ENCODE measurements at regions of chr7 and their contacts with region 1.

Region 1: GRCh38 chr7:32479574-32480200 is 10.5 kb downstream of the LSM5 start:
- DNase-seq: peak in 2 of 9 experiments; percentile 16 to 42
- ATAC-seq: no peak
- H3K4me3 ChIP-seq: no peak overlapping the region
- H3K4me3 Mint-ChIP-seq: no peak overlapping the region
- H3K27ac ChIP-seq: no peak overlapping the region
- H3K27ac Mint-ChIP-seq: no peak overlapping the region
- H3K4me1 ChIP-seq: peaks cover 4% of the 10 kb centered on the region
- H3K4me1 Mint-ChIP-seq: peaks cover 11% of the 10 kb centered on the region
- H3K27me3 ChIP-seq: no peaks in the 10 kb centered on the region
- H3K27me3 Mint-ChIP-seq: no peaks in the 10 kb centered on the region
- CTCF ChIP-seq: peak; percentile 31

Region 2: GRCh38 chr7:32204361-32205018 is 275.2 kb before region 1 on chr7:
- CTCF ChIA-PET with region 1: interaction called, 9 read pairs
- POLR2A ChIA-PET with region 1: no interaction called
- intact Hi-C with region 1: loop called in 1 of 2 experiments (anchors 2 kb)
- DNase-seq: no peak
- ATAC-seq: no peak
- H3K4me3 ChIP-seq: no peak overlapping the region
- H3K4me3 Mint-ChIP-seq: no peak overlapping the region
- H3K27ac ChIP-seq: no peak overlapping the region
- H3K27ac Mint-ChIP-seq: no peak overlapping the region
- H3K4me1 ChIP-seq: no peaks in the 10 kb centered on the region
- H3K4me1 Mint-ChIP-seq: no peaks in the 10 kb centered on the region
- H3K27me3 ChIP-seq: no peaks in the 10 kb centered on the region
- H3K27me3 Mint-ChIP-seq: peaks cover 4% of the 10 kb centered on the region
- CTCF ChIP-seq: no peak

Region 3: DNA sequence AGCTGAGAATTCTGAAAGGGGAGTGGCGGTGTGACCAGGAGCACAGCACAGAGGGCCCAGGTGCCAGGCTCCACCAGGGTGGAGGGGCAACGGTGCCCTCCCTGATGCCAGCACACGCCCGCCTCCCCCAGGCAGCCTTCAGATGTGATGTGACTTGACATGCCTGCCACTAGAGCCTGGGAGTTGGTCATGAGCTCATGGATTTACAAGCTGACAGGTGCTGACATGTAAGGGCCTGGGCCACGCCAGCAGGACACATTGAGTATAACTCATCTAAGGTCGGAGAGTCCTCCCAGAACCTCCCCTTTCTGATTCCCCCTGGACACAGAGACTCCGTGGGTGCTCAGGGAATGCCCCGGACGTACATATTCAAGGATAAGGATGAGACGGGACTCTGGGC is 63.8 kb before region 1 on chr7:
- CTCF ChIA-PET with region 1: no interaction called
- POLR2A ChIA-PET with region 1: no interaction called
- intact Hi-C with region 1: loop called in 1 of 2 experiments (anchors 10 kb)
- DNase-seq: no peak
- ATAC-seq: no peak
- H3K4me3 ChIP-seq: no peak overlapping the region
- H3K4me3 Mint-ChIP-seq: no peak overlapping the region
- H3K27ac ChIP-seq: no peak overlapping the region
- H3K27ac Mint-ChIP-seq: no peak overlapping the region
- H3K4me1 ChIP-seq: no peaks in the 10 kb centered on the region
- H3K4me1 Mint-ChIP-seq: no peaks in the 10 kb centered on the region
- H3K27me3 ChIP-seq: no peaks in the 10 kb centered on the region
- H3K27me3 Mint-ChIP-seq: peaks cover 20% of the 10 kb centered on the region
- CTCF ChIP-seq: no peak

Measured in CD8-positive, alpha-beta T cell (primary cell).